ENCODE measurements at regions of chr22 and their contacts with region 1.

Region 1: GRCh38 chr22:38181453-38182247 is at the start of gene PLA2G6:
- DNase-seq: peak; percentile 97 to 99 (median 98)
- H3K4me3 ChIP-seq: peak within 1 kb of the TSS; percentile 53 to 94 (median 81)
- H3K27ac ChIP-seq: peak within 1 kb of the TSS; percentile 87 to 99 (median 96)
- H3K27me3 ChIP-seq: no peaks in the 10 kb centered on the region
- CTCF ChIP-seq: peak in 18 of 56 donors; percentile 4 to 47 (median 20)
- total RNA-seq, gene PLA2G6: 45.0 to 160 (median 76.4) TPM

Region 2: DNA sequence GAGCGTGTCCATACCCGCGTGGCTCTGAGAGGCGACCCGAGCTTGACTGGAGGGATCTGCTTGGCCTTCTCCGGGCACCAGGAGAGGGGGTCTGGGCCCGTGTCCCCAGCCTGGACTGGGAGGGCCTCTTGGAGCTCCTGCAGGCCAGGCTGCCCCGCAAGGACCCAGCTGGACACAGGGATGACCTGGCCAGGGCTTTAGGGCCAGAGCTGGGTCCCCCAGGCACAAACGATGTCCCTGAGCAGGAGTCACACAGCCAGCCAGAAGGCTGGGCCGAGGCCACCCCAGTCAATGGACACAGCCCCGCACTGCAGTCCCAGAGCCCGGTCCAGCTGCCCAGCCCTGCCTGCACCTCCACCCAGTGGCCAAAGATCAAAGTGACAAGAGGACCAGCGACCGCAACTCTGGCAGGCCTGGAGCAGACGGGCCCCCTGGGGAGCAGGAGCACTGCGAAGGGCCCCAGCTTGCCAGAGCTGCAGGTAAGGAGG is 446.6 kb before region 1 on chr22:
- intact Hi-C with region 1: no loop called
- DNase-seq: peak in 6 of 10 donors; percentile 18 to 56 (median 32)
- H3K4me3 ChIP-seq: no peak overlapping the region
- H3K27ac ChIP-seq: peak overlapping the region in 2 of 59 donors; percentile 0 to 10
- H3K27me3 ChIP-seq: no peaks in the 10 kb centered on the region
- CTCF ChIP-seq: peak in 51 of 56 donors; percentile 13 to 64 (median 38)

Region 3: GRCh38 chr22:38223277-38223960 is 41.8 kb after region 1 on chr22:
- intact Hi-C with region 1: loop called in 1 of 2 experiments (anchors 5 kb)
- DNase-seq: no peak
- H3K4me3 ChIP-seq: no peak overlapping the region
- H3K27ac ChIP-seq: peak overlapping the region in 45 of 59 donors; percentile 12 to 97 (median 56)
- H3K27me3 ChIP-seq: no peaks in the 10 kb centered on the region
- CTCF ChIP-seq: no peak